MCF 10A (cell line): ENCODE measurements at regions of chr14 and their contacts with region 1.

Region 1: DNA sequence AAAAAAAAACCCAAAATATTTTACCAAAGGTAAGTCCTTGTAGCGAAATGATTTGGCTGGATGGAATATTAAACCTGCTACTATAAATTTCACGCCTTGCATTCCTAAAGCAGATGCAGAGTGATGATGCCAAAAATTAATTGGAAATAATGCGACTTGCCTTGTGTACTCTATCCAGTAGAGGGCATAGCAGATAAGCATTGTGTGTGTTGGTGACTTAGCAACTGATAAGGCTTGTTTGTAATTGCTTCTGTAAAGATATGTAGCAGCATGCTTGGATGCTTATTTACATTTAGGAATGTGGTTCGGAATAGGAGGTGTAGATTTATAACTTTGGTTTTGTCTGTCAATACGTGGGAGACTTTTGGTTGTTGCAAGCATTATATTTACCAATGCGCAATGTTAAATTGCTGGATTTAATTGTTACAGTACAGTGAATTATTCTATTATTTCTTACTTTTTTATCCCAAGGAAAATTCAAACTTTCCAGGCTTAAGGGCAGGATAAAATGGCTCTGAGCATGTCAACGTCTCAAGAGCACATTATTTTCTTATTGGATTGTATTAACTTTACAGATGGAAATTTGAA is 80.5 kb downstream of the TMEM260 start:
- DNase-seq: peak; percentile 51
- H3K4me3 Mint-ChIP-seq: no peak overlapping the region
- H3K27ac Mint-ChIP-seq: no peak overlapping the region
- H3K4me1 Mint-ChIP-seq: no peaks in the 10 kb centered on the region
- H3K27me3 Mint-ChIP-seq: no peaks in the 10 kb centered on the region
- CTCF ChIP-seq: peak; percentile 55

Region 2: DNA sequence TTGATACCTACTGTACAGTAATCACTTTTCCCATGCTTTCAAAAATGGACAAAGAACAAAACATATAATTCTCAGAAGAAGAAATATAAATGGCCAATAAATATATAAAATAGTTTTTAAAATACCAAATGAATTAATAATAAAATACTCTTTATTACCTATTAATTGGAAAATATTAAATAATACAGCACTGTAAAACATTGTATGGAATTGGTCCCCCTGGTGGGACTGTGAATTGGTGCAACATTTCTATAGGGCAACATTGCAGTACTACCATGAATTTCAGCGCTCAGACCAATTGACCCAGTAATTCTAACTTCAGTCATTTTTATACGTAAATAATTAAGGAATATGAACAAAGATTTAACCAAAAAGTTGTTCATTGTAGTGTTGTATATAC is 379.2 kb before region 1 on chr14:
- CTCF ChIA-PET with region 1: no interaction called
- POLR2A ChIA-PET with region 1: no interaction called
- intact Hi-C with region 1: no loop called
- DNase-seq: no peak
- H3K4me3 Mint-ChIP-seq: no peak overlapping the region
- H3K27ac Mint-ChIP-seq: no peak overlapping the region
- H3K4me1 Mint-ChIP-seq: no peaks in the 10 kb centered on the region
- H3K27me3 Mint-ChIP-seq: no peaks in the 10 kb centered on the region
- CTCF ChIP-seq: no peak

Region 3: DNA sequence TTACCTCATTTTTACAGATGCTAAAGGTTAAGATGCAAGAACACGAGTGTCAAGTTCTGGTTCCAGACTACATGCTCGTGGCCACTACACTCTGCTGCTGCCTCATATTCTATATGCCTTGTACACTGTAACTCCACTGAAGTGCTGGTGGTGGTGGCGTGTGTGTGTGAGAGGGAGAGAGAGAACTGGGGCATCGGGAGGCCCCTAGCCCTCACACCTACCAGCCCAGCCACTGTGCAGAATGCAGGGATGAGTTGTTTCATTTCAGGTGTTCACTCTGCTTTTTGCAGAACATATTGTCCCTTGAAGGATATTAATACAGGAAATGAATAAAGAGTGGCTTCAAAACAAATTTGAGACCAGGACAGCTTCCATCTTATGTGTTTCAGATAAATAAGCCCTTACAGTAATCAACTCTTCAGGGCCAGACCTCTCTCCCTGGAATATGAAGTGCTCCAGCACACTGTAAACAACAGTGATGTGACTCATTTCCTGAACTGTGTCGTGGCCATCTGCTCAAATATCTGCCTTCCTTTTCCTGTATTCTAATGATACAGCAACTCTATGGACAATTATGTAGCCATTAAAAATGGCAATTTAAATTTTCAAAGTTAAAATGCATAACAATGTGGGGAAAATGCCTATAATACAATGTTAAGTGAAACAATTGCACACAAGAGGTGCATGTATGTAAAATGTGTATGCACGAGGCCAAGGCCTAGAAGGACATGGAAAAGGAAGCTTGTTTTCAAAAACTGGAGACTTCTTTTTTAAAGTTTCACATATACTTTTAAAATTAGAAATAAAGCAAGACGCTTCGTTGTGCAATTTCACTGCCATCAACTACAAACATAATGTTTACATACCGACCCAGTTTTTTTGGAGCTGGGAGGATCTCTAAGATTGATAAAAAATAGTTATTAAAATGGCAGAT is 326.4 kb before region 1 on chr14:
- CTCF ChIA-PET with region 1: no interaction called
- POLR2A ChIA-PET with region 1: no interaction called
- intact Hi-C with region 1: no loop called
- DNase-seq: peak; percentile 56
- H3K4me3 Mint-ChIP-seq: no peak overlapping the region
- H3K27ac Mint-ChIP-seq: peak overlapping the region; percentile 85
- H3K4me1 Mint-ChIP-seq: peaks cover 8% of the 10 kb centered on the region
- H3K27me3 Mint-ChIP-seq: no peaks in the 10 kb centered on the region
- CTCF ChIP-seq: no peak

Region 4: DNA sequence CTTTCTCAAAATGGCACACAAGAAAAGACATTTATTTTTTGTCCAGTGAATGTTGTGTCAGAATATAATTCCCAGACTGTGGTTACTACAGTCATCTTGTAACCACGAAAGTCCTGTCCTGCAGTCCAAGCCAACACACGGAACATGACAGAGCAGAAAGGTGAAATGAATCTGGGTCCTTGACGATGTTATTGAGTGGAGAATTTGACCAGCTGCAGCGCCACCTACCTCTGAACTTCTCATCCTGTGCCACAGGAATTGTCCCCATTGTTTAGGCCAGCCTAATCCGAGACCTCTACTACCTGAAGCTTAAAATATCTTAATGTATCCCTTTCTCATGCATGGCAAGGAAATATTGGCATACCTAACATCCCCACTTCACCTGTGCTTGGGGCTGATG is 214.3 kb after region 1 on chr14:
- CTCF ChIA-PET with region 1: no interaction called
- POLR2A ChIA-PET with region 1: no interaction called
- intact Hi-C with region 1: loop called (anchors 1 kb)
- DNase-seq: peak; percentile 43
- H3K4me3 Mint-ChIP-seq: no peak overlapping the region
- H3K27ac Mint-ChIP-seq: no peak overlapping the region
- H3K4me1 Mint-ChIP-seq: no peaks in the 10 kb centered on the region
- H3K27me3 Mint-ChIP-seq: peaks cover 60% of the 10 kb centered on the region
- CTCF ChIP-seq: peak; percentile 40

Region 5: DNA sequence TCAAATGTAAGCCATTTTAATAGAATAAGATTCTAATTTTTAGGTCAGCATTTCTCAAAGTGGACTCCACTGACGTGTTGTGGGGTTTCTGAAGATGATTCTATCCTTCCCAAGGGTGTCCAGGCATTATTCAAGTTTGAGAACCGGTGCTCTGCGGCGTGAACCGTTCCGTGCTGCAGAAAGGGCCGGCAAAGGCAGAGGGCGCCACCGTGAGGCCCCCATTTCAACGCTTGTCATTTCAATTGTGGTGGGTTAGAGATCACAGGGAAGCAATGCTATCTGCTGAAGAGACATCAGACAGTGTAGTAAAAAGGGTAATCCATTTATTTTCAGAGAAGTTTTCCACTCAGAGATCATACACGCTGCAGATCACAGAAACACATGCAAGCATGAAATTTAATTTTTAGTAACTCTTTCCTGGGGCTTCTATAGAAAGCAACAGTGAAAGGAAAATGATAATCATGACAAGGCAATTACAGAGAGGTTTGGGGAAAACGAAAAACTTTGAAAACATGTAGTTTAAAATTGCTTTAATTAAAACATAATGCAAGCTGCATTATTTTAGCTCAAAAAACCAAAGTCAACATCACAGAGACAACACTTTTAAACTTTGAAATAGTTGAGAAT is 406.9 kb after region 1 on chr14:
- CTCF ChIA-PET with region 1: no interaction called
- POLR2A ChIA-PET with region 1: no interaction called
- intact Hi-C with region 1: loop called (anchors 10 kb)
- DNase-seq: peak; percentile 8
- H3K4me3 Mint-ChIP-seq: no peak overlapping the region
- H3K27ac Mint-ChIP-seq: no peak overlapping the region
- H3K4me1 Mint-ChIP-seq: no peaks in the 10 kb centered on the region
- H3K27me3 Mint-ChIP-seq: peaks cover 85% of the 10 kb centered on the region
- CTCF ChIP-seq: no peak

Region 6: DNA sequence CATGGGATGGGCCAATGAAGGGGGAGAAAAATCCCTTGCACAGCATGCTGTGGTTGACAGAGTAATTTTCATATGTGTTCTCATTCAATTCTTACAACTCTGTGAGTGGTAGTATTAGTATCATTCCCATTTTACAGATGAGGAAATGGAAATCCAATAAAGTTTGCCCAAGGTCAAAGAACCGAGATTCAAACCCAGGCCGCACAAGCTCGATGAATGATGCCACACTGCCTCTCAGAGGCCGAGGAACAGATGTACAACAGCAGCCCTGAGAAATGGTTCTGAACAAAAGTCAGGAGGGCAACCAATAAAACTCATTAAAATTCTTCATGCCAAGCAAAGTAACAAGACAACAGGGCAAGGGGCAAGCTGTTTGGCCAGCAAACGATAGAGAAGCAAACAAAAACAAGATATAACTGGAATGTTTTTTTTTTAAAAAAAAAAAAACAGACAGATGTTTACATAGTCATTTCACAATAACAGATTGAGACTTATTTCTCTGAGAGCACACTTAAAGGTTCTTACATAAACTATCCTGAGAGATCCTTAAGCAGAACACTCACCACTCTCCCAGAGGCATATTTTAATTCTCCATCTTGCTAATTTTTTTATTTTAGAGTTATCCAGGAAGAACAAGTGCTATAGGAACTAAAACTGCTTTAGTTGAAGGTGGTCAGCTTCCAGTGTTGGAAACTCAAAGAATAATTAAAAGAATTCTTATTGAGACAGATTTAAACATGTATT is 522.9 kb after region 1 on chr14:
- CTCF ChIA-PET with region 1: interaction called, 15 read pairs
- POLR2A ChIA-PET with region 1: interaction called, 5 read pairs
- intact Hi-C with region 1: loop called (anchors 5 kb)
- DNase-seq: peak; percentile 45
- H3K4me3 Mint-ChIP-seq: no peak overlapping the region
- H3K27ac Mint-ChIP-seq: no peak overlapping the region
- H3K4me1 Mint-ChIP-seq: no peaks in the 10 kb centered on the region
- H3K27me3 Mint-ChIP-seq: peaks cover 66% of the 10 kb centered on the region
- CTCF ChIP-seq: peak; percentile 44

Region 7: GRCh38 chr14:57317316-57317715 is 657.3 kb after region 1 on chr14:
- CTCF ChIA-PET with region 1: no interaction called
- POLR2A ChIA-PET with region 1: no interaction called
- intact Hi-C with region 1: loop called (anchors 1 kb)
- DNase-seq: peak; percentile 90
- H3K4me3 Mint-ChIP-seq: no peak overlapping the region
- H3K27ac Mint-ChIP-seq: no peak overlapping the region
- H3K4me1 Mint-ChIP-seq: no peaks in the 10 kb centered on the region
- H3K27me3 Mint-ChIP-seq: no peaks in the 10 kb centered on the region
- CTCF ChIP-seq: peak; percentile 91